ENCODE measurements at regions of chr13 and their contacts with region 1.

Region 1: GRCh38 chr13:75365724-75366173 is 116.2 kb downstream of the TBC1D4 start:
- DNase-seq: peak; percentile 43
- H3K4me3 Mint-ChIP-seq: peak overlapping the region; percentile 65
- H3K27ac Mint-ChIP-seq: peak overlapping the region; percentile 96
- H3K4me1 Mint-ChIP-seq: peaks cover 57% of the 10 kb centered on the region
- H3K27me3 Mint-ChIP-seq: no peaks in the 10 kb centered on the region

Region 2: GRCh38 chr13:73722120-73722519 is 1643.6 kb before region 1 on chr13:
- intact Hi-C with region 1: loop called (anchors 5 kb)
- DNase-seq: no peak
- H3K4me3 Mint-ChIP-seq: no peak overlapping the region
- H3K27ac Mint-ChIP-seq: no peak overlapping the region
- H3K4me1 Mint-ChIP-seq: peaks cover 21% of the 10 kb centered on the region
- H3K27me3 Mint-ChIP-seq: peaks cover 10% of the 10 kb centered on the region

Region 3: DNA sequence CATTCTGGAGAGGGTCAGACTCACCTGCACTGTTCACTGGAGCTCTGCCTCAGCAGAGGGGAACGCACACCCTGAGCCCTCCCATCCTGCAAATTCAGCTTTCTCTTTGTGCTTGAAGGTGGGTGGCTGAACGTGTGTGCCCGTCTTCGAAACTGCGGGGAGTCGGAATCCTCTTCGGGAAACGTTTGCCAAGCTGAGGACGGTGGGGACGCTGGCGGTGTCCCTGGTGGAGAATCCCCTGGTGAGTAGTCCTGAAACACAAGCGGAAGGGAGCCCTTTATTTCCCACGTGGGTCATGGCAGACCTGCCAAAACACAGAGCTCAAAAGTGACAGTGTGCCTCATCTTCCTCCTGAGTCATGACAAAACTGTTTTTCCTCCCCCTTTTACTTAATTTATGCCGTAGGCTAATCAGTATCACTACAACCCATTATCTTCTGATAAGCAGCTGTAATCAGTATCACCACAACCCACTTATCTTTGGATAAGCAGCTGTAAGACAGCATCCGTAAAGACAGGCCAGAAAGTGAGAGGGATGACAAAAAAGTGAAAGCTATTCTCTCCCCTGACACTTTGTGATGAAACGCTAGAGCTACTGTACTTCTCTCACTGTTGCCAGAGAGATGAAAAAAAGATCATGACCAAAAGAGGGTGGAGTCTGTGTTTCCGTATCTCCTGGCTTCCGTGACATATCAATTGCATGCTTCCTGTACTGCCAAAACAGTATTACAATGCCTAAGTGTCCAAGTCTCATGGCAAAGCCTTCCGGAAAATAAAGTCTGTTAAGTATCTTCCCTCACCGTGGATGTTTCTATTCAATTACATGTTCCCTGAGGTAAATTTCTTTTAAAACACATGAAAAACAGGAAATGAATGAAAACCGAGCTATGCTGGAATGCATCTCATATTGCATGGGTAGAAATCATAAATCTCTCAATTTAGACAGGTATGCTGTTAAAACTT is 39.3 kb before region 1 on chr13:
- intact Hi-C with region 1: loop called (anchors 1 kb)
- DNase-seq: peak; percentile 46
- H3K4me3 Mint-ChIP-seq: peak overlapping the region; percentile 83
- H3K27ac Mint-ChIP-seq: peak overlapping the region; percentile 96
- H3K4me1 Mint-ChIP-seq: peaks cover 48% of the 10 kb centered on the region
- H3K27me3 Mint-ChIP-seq: no peaks in the 10 kb centered on the region

Region 4: DNA sequence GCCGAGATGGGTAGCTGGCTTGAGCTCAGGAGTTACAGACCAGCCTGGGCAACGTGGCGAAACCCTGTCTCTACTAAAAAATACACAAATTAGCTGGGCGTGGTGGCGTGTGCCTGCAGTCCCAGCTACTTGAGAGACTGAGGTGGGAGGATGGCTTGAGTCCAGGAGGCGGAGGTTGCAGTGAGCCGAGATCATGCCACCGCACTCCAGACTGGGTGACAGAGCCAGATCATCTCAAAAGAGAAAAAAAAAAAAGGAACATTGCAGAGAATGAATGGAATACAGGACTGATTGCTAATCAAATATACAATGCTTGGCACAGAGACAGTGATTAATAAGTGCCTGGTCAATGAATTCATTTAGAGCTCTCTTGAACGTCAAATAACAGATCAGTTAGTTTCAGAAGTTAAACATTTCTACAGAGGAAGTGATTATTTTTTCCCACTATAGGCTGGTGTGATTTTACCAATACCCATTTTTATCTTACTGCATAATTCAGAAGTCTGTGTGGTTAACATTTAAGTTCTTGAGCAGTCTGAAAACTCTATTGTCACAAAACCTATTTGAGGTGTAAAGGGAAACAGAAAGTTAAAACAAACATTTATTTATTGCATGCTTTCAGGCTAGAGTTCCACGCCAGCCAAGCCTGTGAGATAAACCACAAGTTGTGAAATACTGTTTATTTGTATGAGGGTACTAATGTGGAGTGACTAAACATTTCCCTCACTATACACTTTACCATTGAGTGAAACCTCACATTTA is 123.9 kb after region 1 on chr13:
- intact Hi-C with region 1: loop called (anchors 1 kb)
- DNase-seq: no peak
- H3K4me3 Mint-ChIP-seq: no peak overlapping the region
- H3K27ac Mint-ChIP-seq: peak overlapping the region; percentile 20
- H3K4me1 Mint-ChIP-seq: peaks cover 30% of the 10 kb centered on the region
- H3K27me3 Mint-ChIP-seq: peaks cover 12% of the 10 kb centered on the region

Region 5: GRCh38 chr13:75549262-75550158 is 183.8 kb after region 1 on chr13 and contains the start of gene UCHL3:
- intact Hi-C with region 1: loop called (anchors 1 kb)
- DNase-seq: peak; percentile 95
- H3K4me3 Mint-ChIP-seq: peak within 1 kb of the TSS; percentile 99
- H3K27ac Mint-ChIP-seq: peak within 1 kb of the TSS; percentile 98
- H3K4me1 Mint-ChIP-seq: peaks cover 39% of the 10 kb centered on the region
- H3K27me3 Mint-ChIP-seq: no peaks in the 10 kb centered on the region
- total RNA-seq, gene UCHL3: 38.9 and 46.6 TPM in 2 replicates

Measured in activated T-helper 1 cell treated with anti-CD3 and anti-CD28 coated beads, Interleukin-12 subunit alpha, Interleukin-12 subunit beta, Interleukin-2, Interleukin-4 antibody, amounts not matched to agents 30 ng/mL and 10 ng/mL and 1 ng/mL, durations not matched to agents 14 hours and 24 hours and 36 hours (primary cell).